Activated naive CD4-positive, alpha-beta T cell treated with anti-CD3 and anti-CD28 coated beads for 36 hours (primary cell): ENCODE measurements at regions of chr6 and their contacts with region 1.

Region 1: GRCh38 chr6:30821862-30822782 is 62.2 kb upstream of the DDR1 start:
- DNase-seq: no peak
- H3K4me3 Mint-ChIP-seq: no peak overlapping the region
- H3K27ac Mint-ChIP-seq: peak overlapping the region; percentile 4
- H3K4me1 Mint-ChIP-seq: peaks cover 79% of the 10 kb centered on the region
- H3K27me3 Mint-ChIP-seq: no peaks in the 10 kb centered on the region

Region 2: GRCh38 chr6:30541515-30542403 is 280.4 kb before region 1 on chr6:
- CTCF ChIA-PET with region 1: no interaction called
- intact Hi-C with region 1: no loop called
- DNase-seq: peak; percentile 89
- H3K4me3 Mint-ChIP-seq: peak overlapping the region; percentile 71
- H3K27ac Mint-ChIP-seq: peak overlapping the region; percentile 20
- H3K4me1 Mint-ChIP-seq: peaks cover 41% of the 10 kb centered on the region
- H3K27me3 Mint-ChIP-seq: no peaks in the 10 kb centered on the region

Region 3: DNA sequence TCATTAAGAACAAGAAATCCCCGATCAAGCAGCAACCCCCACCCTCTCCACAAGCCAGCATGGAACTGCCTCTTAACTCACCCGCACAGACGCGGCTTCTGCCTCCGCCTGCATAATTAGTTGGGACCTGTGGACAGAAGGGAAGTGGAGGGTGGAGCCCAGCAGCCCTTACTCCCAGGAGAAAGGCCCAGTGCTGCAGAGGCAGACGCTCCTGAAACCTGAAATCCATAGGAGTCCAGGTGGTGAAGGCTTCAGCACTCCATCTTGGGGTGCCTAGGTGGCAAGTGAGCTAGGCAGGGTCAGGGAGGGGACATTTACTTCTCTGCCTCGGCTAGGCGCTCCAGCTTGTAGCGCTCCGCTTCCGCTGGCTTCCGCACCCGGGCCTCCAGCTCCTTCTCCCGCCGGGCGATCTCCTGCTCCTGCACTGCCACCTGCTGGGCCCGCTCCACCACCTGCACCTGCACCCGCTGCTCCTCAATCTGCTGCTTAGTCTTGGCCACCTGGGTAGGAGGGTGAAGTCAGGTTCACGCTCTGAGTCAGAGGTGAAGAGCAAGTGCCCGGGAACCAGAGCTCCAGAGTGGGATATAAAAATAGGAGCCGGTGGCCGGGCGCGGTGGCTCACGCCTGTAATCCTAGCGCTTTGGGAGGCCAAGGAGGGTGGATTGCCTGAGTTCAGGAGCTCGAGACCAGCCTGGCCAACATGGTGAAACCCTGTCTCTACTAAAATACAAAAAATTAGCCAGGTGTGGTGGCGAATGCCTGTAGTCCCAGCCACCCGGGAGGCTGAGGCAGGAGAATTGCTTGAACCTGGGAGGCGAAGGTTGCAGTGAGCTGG is 91.3 kb before region 1 on chr6:
- CTCF ChIA-PET with region 1: interaction called, 34 read pairs
- intact Hi-C with region 1: loop called (anchors 2 kb)
- DNase-seq: peak; percentile 94
- H3K4me3 Mint-ChIP-seq: peak overlapping the region; percentile 29
- H3K27ac Mint-ChIP-seq: no peak overlapping the region
- H3K4me1 Mint-ChIP-seq: peaks cover 47% of the 10 kb centered on the region
- H3K27me3 Mint-ChIP-seq: no peaks in the 10 kb centered on the region

Region 4: DNA sequence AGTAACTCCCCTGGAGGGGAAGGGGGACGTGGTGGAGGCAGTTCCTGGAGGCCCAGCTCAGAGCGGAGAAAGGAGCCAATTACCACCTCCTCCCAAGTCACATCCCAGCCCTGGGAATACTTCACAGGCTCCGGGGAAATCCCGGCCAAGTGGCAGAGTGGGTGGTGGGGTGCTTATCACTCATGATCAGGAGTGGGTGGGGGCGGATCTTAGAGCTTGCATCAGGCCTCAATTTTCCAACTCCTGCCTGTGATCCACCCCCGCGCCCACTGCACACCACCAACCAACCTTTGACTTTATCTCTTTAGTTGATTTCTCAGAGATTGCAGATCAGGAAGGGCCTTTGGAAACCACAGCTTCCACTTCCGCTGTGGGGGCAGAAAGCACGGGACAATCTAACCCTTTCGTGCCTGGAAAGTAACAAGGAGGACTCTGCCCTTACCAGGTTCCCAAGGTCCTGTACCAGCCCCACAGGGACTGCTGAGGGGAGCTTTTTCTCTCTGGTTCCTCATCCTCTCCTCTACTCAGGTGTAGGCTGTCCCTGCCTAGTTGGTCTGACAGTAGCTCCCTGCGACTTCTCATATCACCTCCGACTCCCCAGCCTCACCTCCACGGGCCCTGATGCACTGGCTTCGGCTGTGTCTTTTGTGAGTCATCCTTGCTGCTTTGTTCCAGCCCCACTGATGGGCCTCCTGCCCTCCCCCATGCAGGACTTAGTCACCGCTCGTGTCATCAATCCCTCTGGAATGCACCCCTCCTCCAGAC is 52.9 kb before region 1 on chr6:
- CTCF ChIA-PET with region 1: interaction called, 28 read pairs
- intact Hi-C with region 1: no loop called
- DNase-seq: peak; percentile 85
- H3K4me3 Mint-ChIP-seq: peak overlapping the region; percentile 62
- H3K27ac Mint-ChIP-seq: peak overlapping the region; percentile 97
- H3K4me1 Mint-ChIP-seq: peaks cover 79% of the 10 kb centered on the region
- H3K27me3 Mint-ChIP-seq: no peaks in the 10 kb centered on the region

Region 5: DNA sequence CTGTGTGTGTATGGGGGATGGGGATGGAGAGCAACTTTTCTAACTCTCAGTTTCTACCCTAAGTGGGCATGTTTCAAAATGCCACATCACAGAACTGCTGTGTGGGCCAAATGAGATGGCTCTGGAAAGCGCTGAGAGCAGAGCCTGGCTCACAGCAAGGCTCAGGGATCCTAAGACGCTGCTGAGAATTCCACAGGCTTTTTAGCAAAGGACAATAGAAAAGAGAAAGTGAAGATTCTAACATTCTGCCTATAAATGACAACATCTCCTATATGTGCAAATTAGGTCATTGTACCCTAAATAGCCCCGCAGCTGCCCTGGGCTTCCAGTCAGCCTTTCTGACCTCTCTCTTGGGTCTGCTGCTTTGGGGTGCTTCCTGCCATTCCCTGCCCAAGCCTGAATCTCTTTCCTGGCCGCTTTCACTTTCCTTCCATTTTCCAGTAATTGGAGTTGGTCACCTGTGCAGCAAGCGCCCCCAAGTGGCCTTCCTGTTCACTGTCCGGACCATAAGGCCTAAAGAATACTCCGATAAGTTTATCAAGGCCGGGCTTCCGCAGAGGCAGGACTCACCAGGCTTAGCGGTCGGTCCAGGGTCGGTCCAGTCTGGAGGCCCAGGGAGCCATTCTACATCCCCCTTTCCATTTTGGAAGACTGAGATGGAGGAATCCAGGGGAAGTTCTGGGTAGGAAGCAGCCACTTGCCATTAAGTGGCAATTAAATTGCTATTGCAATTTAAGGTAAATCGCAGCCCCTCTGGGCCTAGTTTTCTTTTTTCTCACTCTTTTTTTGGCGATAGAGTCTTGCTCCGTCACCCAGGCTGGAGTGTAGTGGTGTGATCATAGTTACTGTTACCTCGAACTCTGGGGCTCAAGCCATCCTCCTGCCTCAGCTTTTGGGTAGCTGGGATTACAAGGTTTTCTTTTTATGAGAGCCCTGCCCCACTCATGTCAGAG is 55.6 kb after region 1 on chr6:
- CTCF ChIA-PET with region 1: interaction called, 38 read pairs
- intact Hi-C with region 1: no loop called
- DNase-seq: peak; percentile 89
- H3K4me3 Mint-ChIP-seq: peak overlapping the region; percentile 68
- H3K27ac Mint-ChIP-seq: peak overlapping the region; percentile 84
- H3K4me1 Mint-ChIP-seq: peaks cover 23% of the 10 kb centered on the region
- H3K27me3 Mint-ChIP-seq: no peaks in the 10 kb centered on the region